HepG2 (cell line): ENCODE measurements at regions of chr6 and their contacts with region 1.

Region 1: DNA sequence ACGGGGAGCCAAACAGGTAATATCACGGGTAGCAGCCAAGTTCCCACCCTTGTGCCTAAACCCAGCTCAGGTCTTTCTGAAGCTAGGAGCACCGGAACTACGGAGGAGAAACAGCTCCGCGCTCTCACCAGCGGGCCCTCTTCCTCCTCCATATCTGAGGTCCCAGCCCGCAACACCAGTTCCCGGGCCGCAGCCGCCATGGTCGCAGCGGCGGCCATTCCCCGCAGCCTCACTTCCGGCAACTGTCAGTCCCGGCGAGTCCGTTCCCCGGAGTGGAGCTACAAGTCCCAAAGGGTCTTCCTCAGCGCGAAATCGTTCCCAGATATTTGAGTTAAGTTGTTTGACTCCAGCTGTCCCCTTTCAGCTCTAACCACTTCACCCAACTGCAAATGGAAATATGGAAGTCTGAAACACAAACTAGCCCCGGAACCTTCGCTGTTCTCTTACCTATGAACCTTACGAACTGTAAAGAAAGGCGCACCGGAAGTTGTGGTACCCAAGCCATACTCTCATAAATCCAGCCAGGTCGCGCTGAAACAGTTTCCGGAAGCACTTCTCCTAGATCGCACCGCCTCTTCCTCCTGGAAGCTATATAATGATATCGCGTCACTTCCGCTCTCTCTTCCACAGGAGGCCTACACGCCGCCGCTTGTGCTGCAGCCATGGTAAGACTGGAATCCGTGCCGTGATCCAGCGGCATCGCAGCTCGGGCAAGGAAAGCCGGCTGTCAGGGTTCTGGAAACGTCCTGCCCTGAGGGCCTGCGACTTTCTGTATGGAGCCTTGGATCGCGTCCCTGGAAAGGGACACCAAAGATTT is at the starts of genes RPS18 and VPS52:
- DNase-seq: peak; percentile 100
- ATAC-seq: peak; percentile 92
- H3K4me3 ChIP-seq: peak within 1 kb of the TSS; percentile 75 to 89 (median 82)
- H3K27ac ChIP-seq: peak within 1 kb of the TSS; percentile 95
- H3K4me1 ChIP-seq: peaks cover 48% of the 10 kb centered on the region
- H3K27me3 ChIP-seq: no peaks in the 10 kb centered on the region; a peak in 1 of 5 replicates
- CTCF ChIP-seq: no peak
- EP300 ChIP-seq: peak in 1 of 2 experiments; percentile 10; a peak in 1 of 4 replicates
- POLR2A ChIP-seq: peak; percentile 99
- RAD21 ChIP-seq: peak; percentile 42
- total RNA-seq, gene RPS18: 3,896 and 4,448 TPM in 2 replicates
- total RNA-seq, gene VPS52: 40.2 and 48.9 TPM in 2 replicates

Region 2: DNA sequence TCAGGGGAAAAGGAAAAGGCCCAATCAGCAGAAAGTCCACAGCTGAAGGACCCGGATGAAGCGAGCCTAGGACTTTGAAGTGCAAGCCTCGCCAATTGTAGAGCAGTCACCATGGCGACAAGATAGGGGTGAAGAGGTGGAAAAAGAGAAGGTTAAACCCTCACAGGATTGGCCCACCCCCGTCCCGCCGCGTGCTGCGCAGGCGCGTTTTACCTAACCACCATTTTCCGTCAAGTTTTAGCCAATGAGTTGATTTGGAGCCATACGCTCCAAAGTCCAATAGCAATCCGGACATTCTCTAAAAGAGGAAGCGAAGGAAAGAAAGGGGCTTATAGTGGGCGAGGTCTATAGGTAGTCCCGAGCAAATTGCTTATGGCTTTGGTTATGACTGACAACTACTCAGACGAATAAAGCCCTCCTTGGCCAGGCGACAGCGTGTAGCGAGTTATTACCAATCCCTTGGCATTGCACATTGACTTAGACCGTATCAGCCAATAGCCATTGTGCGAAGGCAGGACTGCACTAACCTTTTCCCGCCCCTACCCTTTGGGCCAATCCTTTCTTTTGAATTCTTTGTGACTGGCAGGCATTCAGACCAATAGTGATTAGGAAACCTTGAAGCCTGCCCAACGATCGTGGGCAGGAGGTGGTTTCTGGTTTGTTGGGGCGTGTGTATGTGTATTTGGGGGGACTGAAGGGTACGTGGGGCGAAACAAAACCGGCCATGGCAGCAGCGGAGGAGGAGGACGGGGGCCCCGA is 1093.7 kb before region 1 on chr6 and contains the start of gene RNF5:
- CTCF ChIA-PET with region 1: no interaction called
- POLR2A ChIA-PET with region 1: interaction called, 5 read pairs
- in situ Hi-C with region 1: no loop called
- intact Hi-C with region 1: loop called (anchors 5 kb)
- DNase-seq: peak; percentile 100
- ATAC-seq: peak; percentile 90
- H3K4me3 ChIP-seq: peak within 1 kb of the TSS; percentile 96 to 98 (median 98)
- H3K27ac ChIP-seq: peak within 1 kb of the TSS; percentile 97
- H3K4me1 ChIP-seq: peaks cover 54% of the 10 kb centered on the region
- H3K27me3 ChIP-seq: no peaks in the 10 kb centered on the region; a peak in 1 of 5 replicates
- CTCF ChIP-seq: no peak
- EP300 ChIP-seq: peak; percentile 10 to 17; a peak in 1 of 4 replicates
- POLR2A ChIP-seq: peak; percentile 1 to 14; a peak in 1 of 4 replicates
- RAD21 ChIP-seq: no peak
- total RNA-seq, gene RNF5: 98.0 and 107 TPM in 2 replicates

Region 3: DNA sequence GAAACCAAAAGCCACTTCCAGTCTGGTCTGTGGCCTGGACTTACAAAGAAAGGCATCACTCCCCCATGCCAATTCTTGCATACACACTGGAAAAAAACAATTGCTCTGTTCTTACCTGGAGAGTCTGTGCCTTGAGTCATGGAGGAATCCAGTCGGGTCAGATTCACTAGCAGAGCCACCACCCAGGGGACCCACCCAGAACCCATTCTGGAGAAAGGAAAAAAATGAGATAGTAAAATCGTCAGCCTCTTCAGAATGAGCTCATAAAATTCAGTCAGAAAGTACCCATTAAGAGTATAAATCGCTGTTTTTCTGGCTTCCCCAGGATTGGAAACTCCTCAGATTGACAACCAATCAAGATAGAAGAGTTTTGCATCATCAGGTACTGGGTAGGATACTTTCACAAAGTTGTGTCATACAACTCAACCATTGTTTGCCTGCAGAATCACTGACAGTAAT is 454.9 kb before region 1 on chr6 and contains the start of gene HLA-DOB:
- CTCF ChIA-PET with region 1: no interaction called
- POLR2A ChIA-PET with region 1: no interaction called
- in situ Hi-C with region 1: no loop called
- intact Hi-C with region 1: no loop called
- DNase-seq: no peak
- ATAC-seq: no peak; the same call in 2 of the 3 replicates
- H3K4me3 ChIP-seq: no peak within 1 kb of the TSS
- H3K27ac ChIP-seq: no peak within 1 kb of the TSS
- H3K4me1 ChIP-seq: no peaks in the 10 kb centered on the region
- H3K27me3 ChIP-seq: peaks cover 0 to 24% of the 10 kb centered on the region in 2 experiments; a peak in 2 of 5 replicates
- CTCF ChIP-seq: no peak
- EP300 ChIP-seq: no peak
- POLR2A ChIP-seq: no peak
- RAD21 ChIP-seq: no peak
- total RNA-seq, gene HLA-DOB: not detected in 2 replicates

Region 4: DNA sequence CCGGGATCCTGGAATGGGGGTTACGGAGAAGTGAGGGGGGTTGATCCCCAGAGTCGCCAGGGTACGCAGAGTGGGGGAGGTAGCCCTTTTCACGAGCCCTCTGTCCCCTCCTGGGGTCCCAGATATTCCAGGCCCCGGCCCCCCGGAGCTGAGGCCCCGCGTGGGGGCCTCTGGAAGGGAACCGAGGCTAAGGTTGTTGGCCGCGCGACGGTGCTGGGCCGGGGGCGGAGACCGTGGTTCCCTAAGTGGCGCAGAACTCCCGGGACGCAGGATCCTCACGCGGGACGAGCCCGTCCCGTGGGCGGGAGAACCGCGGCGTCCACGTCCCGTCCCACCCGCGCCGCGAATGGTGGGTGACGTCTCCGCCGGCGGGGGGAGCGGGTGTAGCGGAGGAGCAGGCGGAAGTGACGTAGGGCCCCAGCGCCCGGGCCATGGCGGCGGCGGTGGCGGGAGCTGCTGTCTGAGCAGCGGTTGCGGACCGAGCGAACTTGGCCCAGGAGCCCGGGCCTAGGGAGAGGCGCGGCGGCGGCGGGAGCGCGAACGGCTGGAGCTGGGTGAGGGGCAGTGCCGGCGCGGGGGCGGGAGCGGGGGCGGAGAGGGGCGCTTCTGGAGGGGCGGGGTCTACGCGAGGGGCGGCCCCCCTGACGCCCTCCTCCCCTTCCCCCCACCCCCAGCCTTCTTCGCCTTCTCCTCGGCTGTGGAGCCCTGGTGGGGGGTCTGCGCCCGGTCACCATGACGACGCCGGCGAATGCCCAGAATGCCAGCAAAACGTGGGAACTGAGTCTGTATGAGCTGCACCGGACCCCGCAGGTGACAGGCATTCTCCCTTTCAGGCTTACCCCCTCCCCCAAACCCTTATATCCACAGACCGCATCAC is 63.3 kb before region 1 on chr6 and contains the start of gene RING1:
- CTCF ChIA-PET with region 1: no interaction called
- POLR2A ChIA-PET with region 1: interaction called, 11 read pairs
- in situ Hi-C with region 1: no loop called
- intact Hi-C with region 1: no loop called
- DNase-seq: peak; percentile 59
- ATAC-seq: peak; percentile 30
- H3K4me3 ChIP-seq: peak within 1 kb of the TSS; percentile 90 to 93 (median 91)
- H3K27ac ChIP-seq: peak within 1 kb of the TSS; percentile 76
- H3K4me1 ChIP-seq: peaks cover 58% of the 10 kb centered on the region
- H3K27me3 ChIP-seq: peaks cover 0 to 1% of the 10 kb centered on the region in 2 experiments; a peak in 1 of 5 replicates
- CTCF ChIP-seq: peak; percentile 18; the same call in 1 of the 2 replicates
- EP300 ChIP-seq: no peak
- POLR2A ChIP-seq: peak in 1 of 2 experiments; percentile 78; a peak in 2 of 4 replicates
- RAD21 ChIP-seq: peak; percentile 44; the same call in 1 of the 2 replicates
- total RNA-seq, gene RING1: 19.8 and 23.9 TPM in 2 replicates

Region 5: DNA sequence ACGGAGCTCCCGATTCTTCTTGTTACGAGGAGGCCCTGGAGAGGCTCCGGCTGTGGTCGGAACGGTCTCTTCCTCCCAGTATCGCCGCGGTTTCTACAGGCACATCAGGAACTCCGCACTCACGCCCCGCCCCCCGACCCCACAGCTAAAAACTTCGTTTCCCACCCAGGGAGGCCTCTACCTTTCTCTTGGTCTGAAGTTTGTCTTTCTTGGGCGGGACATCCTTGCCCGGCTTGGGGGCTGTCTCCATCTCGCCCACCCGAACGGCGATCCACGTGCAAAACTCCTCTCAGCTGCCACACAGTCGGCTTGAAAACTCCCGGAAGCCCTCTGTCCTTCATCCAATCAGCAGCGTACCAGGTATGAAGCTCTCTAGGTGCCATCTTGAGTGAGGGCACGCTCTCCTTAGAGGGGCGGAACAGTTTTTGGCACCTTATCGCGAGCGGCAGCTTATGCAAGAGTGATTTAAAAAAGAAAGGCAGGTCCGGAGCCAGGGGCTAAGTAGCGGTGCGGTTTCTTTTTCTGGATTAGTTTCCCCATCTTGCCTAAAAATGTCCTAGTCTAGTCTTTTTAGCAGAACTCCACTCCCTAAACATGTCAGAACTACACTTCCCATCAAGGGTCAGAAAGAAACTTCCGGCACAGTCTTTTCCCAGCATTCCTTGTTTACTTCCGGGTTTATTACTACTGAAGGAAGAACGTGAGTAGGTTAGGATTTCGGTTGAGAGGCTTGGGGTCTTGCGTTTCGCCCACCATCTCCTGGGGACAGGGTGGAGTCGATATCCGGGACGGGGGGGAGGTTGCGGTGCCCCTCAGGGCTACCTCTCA is 17.5 kb after region 1 on chr6 and contains the starts of genes PFDN6 and WDR46:
- CTCF ChIA-PET with region 1: no interaction called
- POLR2A ChIA-PET with region 1: interaction called, 41 read pairs
- in situ Hi-C with region 1: no loop called
- intact Hi-C with region 1: no loop called
- DNase-seq: peak; percentile 95
- ATAC-seq: peak; percentile 97
- H3K4me3 ChIP-seq: peak within 1 kb of the TSS; percentile 73 to 96 (median 94)
- H3K27ac ChIP-seq: peak within 1 kb of the TSS; percentile 56
- H3K4me1 ChIP-seq: peaks cover 22% of the 10 kb centered on the region
- H3K27me3 ChIP-seq: no peaks in the 10 kb centered on the region; a peak in 1 of 5 replicates
- CTCF ChIP-seq: 0 out of 2 replicates have a peak, but pooled peaks have one; percentile 3
- EP300 ChIP-seq: no peak; a peak in 1 of 4 replicates
- POLR2A ChIP-seq: peak; percentile 71 to 72
- RAD21 ChIP-seq: no peak
- total RNA-seq, gene PFDN6: 87.0 and 118 TPM in 2 replicates
- total RNA-seq, gene WDR46: 99.9 and 105 TPM in 2 replicates

Region 6: GRCh38 chr6:33317669-33318425 is 46.2 kb after region 1 on chr6 and contains the start of gene ZBTB22:
- CTCF ChIA-PET with region 1: no interaction called
- POLR2A ChIA-PET with region 1: interaction called, 43 read pairs
- in situ Hi-C with region 1: no loop called
- intact Hi-C with region 1: loop called (anchors 5 kb)
- DNase-seq: peak; percentile 99
- ATAC-seq: peak; percentile 79
- H3K4me3 ChIP-seq: peak within 1 kb of the TSS; percentile 71 to 79 (median 73)
- H3K27ac ChIP-seq: peak within 1 kb of the TSS; percentile 82
- H3K4me1 ChIP-seq: peaks cover 55% of the 10 kb centered on the region
- H3K27me3 ChIP-seq: no peaks in the 10 kb centered on the region; a peak in 2 of 5 replicates
- CTCF ChIP-seq: no peak
- EP300 ChIP-seq: no peak
- POLR2A ChIP-seq: no peak
- RAD21 ChIP-seq: no peak
- total RNA-seq, gene ZBTB22: 6.6 and 8.0 TPM in 2 replicates

Region 7: DNA sequence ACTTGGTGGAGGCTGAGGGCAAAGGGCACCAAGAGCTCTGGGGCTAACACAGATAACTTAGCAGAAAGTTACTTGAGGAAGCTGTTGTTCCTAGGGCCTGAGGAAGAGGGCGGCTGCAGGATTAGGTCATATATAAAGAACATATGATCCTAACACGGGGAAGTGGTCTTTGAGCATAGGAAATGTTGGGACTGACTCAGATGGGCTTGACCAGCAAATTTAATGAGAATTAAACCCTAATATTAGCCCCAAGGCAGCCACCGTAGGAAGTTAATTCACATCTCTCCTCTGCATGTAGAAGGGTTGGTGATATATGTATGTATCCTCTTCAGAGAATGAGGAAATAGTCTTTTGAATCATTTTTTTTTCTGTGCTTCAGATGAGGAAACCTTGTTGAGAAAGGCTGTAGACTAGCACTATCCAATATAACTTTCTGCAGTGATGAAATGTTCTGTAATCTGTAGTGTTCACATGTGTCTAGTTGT is 173.5 kb after region 1 on chr6:
- CTCF ChIA-PET with region 1: no interaction called
- POLR2A ChIA-PET with region 1: no interaction called
- in situ Hi-C with region 1: no loop called
- intact Hi-C with region 1: no loop called
- DNase-seq: no peak
- ATAC-seq: no peak
- H3K4me3 ChIP-seq: no peak overlapping the region
- H3K27ac ChIP-seq: no peak overlapping the region
- H3K4me1 ChIP-seq: no peaks in the 10 kb centered on the region
- H3K27me3 ChIP-seq: no peaks in the 10 kb centered on the region; a peak in 1 of 5 replicates
- CTCF ChIP-seq: no peak
- EP300 ChIP-seq: no peak
- POLR2A ChIP-seq: no peak
- RAD21 ChIP-seq: no peak